Right ventricle myocardium superior (tissue), 1 donor: ENCODE measurements at regions of chr9 and their contacts with region 1.

Region 1: DNA sequence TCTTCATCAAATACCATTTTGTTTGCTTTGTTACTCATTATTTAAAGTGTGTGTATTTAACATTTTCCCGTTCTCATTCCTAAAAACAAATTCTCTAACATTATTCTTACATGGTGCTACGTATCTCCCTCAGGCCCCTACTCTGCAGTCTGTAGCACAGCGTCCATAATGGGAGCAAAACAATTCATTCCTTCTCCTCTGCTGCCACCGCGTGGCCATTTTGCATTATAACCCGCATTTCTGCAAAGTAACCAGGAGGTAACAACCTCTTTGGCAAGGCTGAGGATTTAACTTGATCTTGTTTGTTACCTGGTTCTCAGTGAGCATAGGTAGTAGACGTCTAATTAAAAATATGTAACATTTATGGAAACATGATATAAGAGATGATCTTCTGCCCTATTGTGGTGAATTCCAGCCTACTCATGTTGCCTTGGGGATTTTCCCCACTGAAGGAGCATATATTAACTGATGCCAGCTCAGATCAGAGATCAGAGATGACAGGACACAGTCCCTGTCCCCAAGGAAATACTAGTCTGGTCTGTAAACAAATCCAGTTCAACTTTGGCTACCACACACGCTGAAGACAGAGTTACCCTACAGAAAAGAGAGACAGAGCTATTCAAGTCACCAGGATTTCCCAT is 10.5 kb downstream of the OR1K1 start:
- DNase-seq: peak; percentile 71
- ATAC-seq: peak; percentile 94

Region 2: DNA sequence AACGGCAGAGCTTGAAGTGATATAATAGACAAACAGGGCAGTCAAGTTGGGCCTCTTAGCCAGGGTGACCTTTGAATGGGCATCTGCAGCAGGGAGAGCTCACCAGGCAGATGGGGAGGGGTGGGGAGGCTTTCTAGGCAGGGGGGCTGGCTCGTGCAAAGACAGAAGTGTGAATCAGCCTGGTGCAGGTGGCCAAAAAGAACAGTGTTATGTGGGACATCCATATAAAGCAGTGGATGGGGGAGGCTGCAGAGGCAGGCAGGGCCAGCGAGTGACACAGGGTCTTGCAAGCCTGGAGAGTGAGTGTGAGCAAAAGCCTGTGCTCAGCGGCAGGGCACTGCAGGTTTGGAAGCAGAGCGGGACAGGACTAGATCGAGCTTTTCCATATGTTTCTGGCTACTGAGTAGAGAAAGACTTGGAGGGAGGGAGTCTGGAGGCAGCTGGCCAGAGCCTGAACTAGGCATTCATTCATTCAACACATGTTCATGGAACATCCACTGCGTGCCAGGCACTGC is 703.1 kb before region 1 on chr9:
- intact Hi-C with region 1: loop called (anchors 10 kb)
- DNase-seq: no peak
- ATAC-seq: peak; percentile 58

Region 3: GRCh38 chr9:122125158-122125508 is 685.3 kb before region 1 on chr9:
- intact Hi-C with region 1: loop called (anchors 10 kb)
- DNase-seq: peak; percentile 86
- ATAC-seq: peak; percentile 87

Region 4: DNA sequence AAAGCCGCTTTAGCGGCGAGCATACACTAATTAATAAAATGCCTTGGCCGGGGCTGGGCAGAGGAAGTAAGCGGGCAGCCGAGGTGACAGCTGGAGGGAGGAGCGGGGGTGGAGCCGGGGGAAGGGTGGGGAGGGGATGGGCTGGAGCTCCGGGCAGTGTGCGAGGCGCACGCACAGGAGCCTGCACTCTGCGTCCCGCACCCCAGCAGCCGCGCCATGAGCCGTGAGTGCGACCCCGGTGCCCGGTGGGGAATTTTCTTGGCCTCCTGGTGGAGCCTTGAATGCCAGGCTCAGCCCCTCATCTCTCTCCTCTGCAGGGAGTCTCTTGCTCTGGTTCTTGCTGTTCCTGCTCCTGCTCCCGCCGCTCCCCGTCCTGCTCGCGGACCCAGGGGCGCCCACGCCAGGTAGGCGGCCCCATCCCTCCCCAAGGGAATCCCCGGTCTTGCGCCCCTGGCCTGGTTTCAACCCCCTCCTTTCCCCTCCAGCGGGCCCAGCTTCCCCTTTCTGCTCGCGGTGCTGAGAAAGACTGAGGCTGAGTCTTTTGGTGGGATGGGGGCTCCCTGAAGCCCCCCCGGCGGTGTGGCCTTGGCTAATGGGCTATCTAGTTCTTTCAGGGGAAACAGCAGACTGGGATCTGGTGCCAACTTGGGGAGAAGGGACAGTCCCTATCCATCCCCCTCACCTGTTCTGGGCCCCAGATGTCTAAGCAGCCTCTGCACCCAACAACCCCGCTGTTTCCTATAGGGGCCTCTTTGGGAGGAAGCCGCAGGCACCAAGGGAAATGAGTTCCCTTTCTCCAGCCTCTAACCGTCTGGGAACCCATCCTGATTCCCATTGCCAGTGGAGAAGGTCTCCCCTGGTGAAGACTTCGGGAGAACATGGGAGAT is 439.3 kb before region 1 on chr9 and contains the start of gene PTGS1:
- intact Hi-C with region 1: loop called (anchors 10 kb)
- DNase-seq: peak; percentile 75
- ATAC-seq: peak; percentile 69
- total RNA-seq, gene PTGS1: 4.0 TPM

Region 5: GRCh38 chr9:122464633-122465567 is 345.5 kb before region 1 on chr9:
- intact Hi-C with region 1: loop called (anchors 2 kb)
- DNase-seq: peak; percentile 52
- ATAC-seq: peak; percentile 90

Region 6: DNA sequence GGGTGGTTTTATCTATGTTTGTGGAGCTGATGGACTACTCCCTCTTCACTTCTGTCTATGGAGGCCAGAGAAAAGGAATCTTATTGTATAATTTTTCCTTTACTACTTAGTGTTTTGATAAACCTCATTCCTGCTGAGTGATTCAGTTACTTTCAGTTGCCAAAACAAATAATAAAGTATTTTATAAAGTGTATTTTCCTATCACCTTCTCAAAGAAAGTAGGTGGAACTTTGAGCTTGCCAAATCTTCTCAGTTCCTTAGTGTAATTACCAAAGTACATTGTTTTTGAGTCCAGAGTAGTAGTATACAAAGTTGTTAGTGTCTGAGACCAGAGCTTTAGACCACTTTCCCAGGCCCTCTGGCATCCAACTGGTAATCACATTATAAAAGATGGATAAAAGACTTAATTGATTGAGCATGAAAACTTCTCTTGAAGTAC is 143.8 kb after region 1 on chr9:
- intact Hi-C with region 1: no loop called
- DNase-seq: no peak
- ATAC-seq: no peak

Region 7: DNA sequence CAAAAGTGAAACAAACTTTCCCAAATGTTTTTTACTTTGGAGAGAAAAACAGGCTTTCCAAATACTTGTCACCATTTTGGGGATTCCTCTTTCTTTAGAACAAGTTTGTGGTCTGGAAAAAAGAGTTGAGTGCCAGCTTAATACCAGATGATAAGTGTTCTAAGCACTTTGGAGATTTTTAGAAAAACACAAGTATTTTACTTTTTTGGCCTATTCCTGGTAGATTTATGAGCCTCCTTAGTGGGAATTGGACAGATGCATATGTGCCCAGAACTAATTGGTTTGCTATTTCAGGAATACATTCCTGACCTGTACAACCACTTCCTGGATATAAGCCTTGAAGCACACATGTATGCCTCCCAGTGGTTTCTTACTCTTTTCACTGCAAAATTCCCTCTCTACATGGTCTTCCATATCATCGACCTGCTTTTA is 263.6 kb after region 1 on chr9:
- intact Hi-C with region 1: no loop called
- DNase-seq: no peak
- ATAC-seq: no peak